Keratinocyte (primary cell): ENCODE measurements at regions of chr4 and their contacts with region 1.

Region 1: GRCh38 chr4:69907151-69907550 is 23.7 kb upstream of the CSN1S1 start:
- DNase-seq: no peak
- H3K4me3 ChIP-seq: no peak overlapping the region
- H3K27ac ChIP-seq: no peak overlapping the region
- H3K4me1 ChIP-seq: no peaks in the 10 kb centered on the region
- H3K27me3 ChIP-seq: no peaks in the 10 kb centered on the region
- CTCF ChIP-seq: no peak

Region 2: GRCh38 chr4:69360271-69360670 is 546.9 kb before region 1 on chr4:
- dilution Hi-C with region 1: no loop called
- DNase-seq: no peak
- H3K4me3 ChIP-seq: no peak overlapping the region
- H3K27ac ChIP-seq: no peak overlapping the region
- H3K4me1 ChIP-seq: no peaks in the 10 kb centered on the region
- H3K27me3 ChIP-seq: no peaks in the 10 kb centered on the region
- CTCF ChIP-seq: no peak

Region 3: DNA sequence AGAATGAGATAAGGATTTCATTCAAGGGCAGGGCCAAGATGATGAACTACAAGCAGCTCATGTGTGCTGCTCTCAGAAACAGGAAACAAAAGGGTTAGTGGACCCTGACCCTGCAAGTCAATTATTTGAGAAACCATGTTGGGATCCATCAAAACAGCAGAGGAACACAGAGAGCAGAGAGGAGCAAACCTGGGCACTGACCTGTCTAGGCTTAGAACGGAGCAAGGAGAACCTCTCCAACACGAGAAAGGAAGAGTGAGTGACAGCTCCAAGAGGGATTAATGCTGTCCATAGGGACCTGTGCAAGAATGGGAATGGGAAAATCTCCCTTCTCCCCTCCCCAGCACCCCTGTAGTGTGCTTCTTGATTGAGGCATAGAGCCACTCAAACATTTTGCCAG is 357.5 kb before region 1 on chr4:
- dilution Hi-C with region 1: no loop called
- DNase-seq: no peak
- H3K4me3 ChIP-seq: no peak overlapping the region
- H3K27ac ChIP-seq: no peak overlapping the region
- H3K4me1 ChIP-seq: no peaks in the 10 kb centered on the region
- H3K27me3 ChIP-seq: no peaks in the 10 kb centered on the region
- CTCF ChIP-seq: no peak

Region 4: DNA sequence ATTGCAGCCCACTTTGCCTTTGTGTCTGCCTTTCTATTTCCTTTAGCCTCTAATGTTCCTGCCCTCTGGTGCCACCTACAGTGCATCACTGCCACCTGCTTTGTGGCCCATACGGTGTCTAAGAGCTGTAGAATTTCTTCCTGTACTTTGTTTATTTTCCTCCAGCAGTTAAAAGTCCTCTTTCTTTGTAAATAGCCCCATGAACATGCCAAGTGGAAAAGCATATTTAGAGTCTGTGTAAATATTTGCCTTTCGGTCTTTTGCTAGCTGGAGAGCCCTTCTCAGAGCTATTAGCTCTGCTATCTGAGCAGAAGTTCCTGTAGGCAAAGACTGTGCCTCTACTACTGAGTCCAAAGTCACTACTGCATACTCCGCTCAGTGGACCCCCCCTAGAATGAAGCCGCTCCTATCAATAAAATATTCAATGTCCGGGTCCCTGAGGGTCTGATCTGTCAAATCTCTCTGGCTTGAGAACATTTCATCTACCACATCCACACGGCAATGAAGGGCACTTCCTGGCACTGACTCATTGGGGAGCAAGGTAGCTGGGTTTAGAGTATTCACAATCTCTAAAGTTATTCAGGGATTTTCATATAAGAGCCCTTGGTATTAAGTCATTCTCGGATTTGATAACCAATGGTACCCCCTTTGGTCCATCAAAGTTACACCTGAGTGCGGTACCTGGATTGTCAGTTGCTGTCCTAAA is 83.5 kb before region 1 on chr4:
- dilution Hi-C with region 1: no loop called
- DNase-seq: no peak
- H3K4me3 ChIP-seq: no peak overlapping the region
- H3K27ac ChIP-seq: no peak overlapping the region
- H3K4me1 ChIP-seq: no peaks in the 10 kb centered on the region
- H3K27me3 ChIP-seq: no peaks in the 10 kb centered on the region
- CTCF ChIP-seq: peak; percentile 69 to 84 (median 80)

Region 5: DNA sequence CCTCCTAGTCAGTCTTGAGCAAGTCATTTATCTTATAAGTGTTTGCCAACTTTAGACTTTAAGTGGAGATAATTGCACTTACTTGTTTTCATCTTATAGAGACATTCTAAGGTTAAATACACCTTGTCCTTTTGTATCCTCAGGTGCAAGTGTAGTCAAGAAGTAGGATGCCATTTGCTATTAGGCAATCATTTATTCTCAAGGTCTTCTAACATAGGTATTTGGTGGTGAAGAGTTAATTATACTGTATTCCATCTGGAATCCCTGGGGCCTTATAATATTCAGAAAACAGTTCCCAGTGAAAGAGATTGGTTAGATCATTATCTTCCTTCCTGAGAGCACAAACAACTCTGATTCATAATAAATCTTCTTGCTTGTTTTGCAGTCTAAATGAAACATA is 70.9 kb before region 1 on chr4:
- dilution Hi-C with region 1: no loop called
- DNase-seq: no peak
- H3K4me3 ChIP-seq: no peak overlapping the region
- H3K27ac ChIP-seq: no peak overlapping the region
- H3K4me1 ChIP-seq: peaks cover 3% of the 10 kb centered on the region
- H3K27me3 ChIP-seq: no peaks in the 10 kb centered on the region
- CTCF ChIP-seq: no peak

Region 6: DNA sequence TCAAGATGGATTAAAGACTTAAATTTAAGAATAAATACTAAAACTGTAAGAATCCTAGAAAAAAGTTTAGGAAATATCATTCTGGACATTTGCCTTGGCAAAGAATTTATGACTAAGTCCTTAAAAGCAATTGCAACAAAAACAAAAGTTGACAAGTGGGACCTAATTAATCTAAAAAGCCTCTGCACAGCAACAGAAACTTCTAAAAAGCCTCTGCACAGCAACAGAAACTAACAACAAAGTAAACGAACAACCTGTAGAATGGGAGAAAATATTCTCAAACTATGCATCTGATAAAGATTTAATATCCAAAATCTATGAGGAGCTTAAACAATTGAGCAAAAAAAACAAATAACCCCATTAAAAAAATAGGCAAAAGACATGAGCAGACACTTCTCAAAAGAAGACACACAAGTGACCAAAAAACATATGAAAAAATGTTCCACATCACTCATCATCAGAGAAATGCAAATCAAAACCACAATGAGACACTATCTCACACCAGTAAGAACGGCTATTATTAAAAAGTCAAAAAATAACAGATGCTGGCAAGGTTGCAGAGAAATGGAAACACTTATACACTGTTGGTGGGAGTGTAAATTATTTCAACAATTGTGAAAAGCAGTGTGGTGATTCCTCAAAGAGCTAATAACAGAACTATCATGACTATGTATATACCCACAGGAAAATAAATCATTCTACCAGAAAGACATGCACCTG is 485.1 kb after region 1 on chr4:
- dilution Hi-C with region 1: loop called (anchors 10 kb)
- DNase-seq: no peak
- H3K4me3 ChIP-seq: no peak overlapping the region
- H3K27ac ChIP-seq: no peak overlapping the region
- H3K4me1 ChIP-seq: no peaks in the 10 kb centered on the region
- H3K27me3 ChIP-seq: no peaks in the 10 kb centered on the region
- CTCF ChIP-seq: no peak